MCF 10A (cell line): ENCODE measurements at regions of chrX and their contacts with region 1.

Region 1: GRCh38 chrX:133171962-133172708 is 46.0 kb downstream of the TFDP3 start:
- DNase-seq: peak; percentile 56
- H3K4me3 Mint-ChIP-seq: no peak overlapping the region
- H3K27ac Mint-ChIP-seq: no peak overlapping the region
- H3K4me1 Mint-ChIP-seq: no peaks in the 10 kb centered on the region
- H3K27me3 Mint-ChIP-seq: peaks cover 67% of the 10 kb centered on the region
- CTCF ChIP-seq: peak; percentile 71

Region 2: DNA sequence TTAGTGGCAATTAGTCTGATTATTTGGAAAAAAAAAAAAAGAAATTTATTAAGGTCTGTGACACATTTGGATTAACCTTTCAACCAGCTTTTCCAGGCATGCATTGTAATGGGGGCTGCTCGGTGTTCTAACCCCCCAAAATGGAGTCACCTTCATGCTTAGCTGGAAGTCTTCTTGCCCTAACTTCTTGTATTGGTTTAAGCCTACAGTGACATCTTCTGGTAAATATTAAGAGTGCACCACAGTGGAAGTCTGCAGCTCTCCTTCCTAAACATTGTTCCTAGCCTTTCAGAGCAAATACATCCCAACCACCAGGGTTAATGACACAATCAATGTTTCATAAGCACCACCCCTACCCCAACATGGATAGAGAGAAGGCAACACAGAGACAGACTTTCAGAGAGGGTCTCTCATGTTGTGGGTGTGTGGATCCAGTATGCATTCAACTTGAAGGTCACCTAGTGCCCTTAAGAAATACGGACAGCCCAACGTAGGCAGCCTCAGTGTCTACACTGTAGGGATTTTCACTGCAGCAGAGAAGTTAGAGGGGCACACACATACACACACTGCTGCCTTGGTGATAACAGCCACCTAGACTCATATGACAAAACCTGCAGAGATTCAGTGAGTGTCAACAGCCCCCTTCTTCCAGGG is 540.4 kb before region 1 on chrX:
- CTCF ChIA-PET with region 1: no interaction called
- POLR2A ChIA-PET with region 1: no interaction called
- intact Hi-C with region 1: loop called (anchors 1 kb)
- DNase-seq: peak; percentile 33
- H3K4me3 Mint-ChIP-seq: no peak overlapping the region
- H3K27ac Mint-ChIP-seq: no peak overlapping the region
- H3K4me1 Mint-ChIP-seq: no peaks in the 10 kb centered on the region
- H3K27me3 Mint-ChIP-seq: peaks cover 63% of the 10 kb centered on the region
- CTCF ChIP-seq: peak; percentile 38

Region 3: GRCh38 chrX:133005066-133005465 is 167.1 kb before region 1 on chrX:
- CTCF ChIA-PET with region 1: interaction called, 5 read pairs
- POLR2A ChIA-PET with region 1: interaction called, 3 read pairs
- intact Hi-C with region 1: loop called (anchors 1 kb)
- DNase-seq: peak; percentile 30
- H3K4me3 Mint-ChIP-seq: no peak overlapping the region
- H3K27ac Mint-ChIP-seq: no peak overlapping the region
- H3K4me1 Mint-ChIP-seq: no peaks in the 10 kb centered on the region
- H3K27me3 Mint-ChIP-seq: peaks cover 53% of the 10 kb centered on the region
- CTCF ChIP-seq: peak; percentile 57

Region 4: GRCh38 chrX:133134281-133134680 is 37.9 kb before region 1 on chrX:
- CTCF ChIA-PET with region 1: no interaction called
- POLR2A ChIA-PET with region 1: no interaction called
- intact Hi-C with region 1: no loop called
- DNase-seq: no peak
- H3K4me3 Mint-ChIP-seq: no peak overlapping the region
- H3K27ac Mint-ChIP-seq: no peak overlapping the region
- H3K4me1 Mint-ChIP-seq: no peaks in the 10 kb centered on the region
- H3K27me3 Mint-ChIP-seq: peaks cover 68% of the 10 kb centered on the region
- CTCF ChIP-seq: no peak

Region 5: DNA sequence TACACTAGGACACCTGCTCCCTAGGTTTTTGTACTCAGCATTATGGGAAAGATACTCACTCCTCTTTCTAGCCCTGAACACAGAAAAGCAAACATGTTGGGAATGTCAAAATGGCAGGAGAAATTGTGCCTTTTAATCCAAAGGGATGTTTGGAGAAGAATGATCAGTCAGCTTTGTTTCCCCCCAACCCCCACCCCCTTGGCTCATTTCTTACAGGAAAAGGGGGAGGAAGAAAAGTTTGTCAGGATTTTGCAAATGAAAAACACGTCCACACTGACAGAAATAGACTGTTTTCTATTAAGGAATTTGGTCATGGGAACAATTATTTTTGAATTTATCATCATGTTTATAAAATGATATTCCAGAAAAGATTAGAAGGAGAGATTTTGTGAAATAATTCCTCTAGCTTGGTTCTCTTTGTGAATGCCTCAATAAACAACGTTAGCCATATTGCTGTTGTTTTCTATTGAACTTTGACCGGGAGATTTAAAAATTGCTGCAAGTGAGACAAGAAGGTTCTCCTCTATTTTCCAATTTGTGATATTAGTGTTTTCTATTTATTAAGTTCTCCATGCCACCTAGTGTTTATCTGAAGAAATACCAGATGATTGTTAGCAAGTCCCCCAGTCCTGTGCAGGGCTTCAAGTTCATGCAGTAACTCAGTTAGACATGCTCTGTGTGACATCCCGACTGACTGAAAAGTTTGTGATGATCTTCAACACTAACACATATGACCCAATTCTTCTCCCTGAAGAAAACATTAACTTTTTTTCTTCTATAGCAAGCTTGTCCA is 77.3 kb after region 1 on chrX:
- CTCF ChIA-PET with region 1: interaction called, 5 read pairs
- POLR2A ChIA-PET with region 1: no interaction called
- intact Hi-C with region 1: loop called (anchors 2 kb)
- DNase-seq: peak; percentile 11
- H3K4me3 Mint-ChIP-seq: no peak overlapping the region
- H3K27ac Mint-ChIP-seq: no peak overlapping the region
- H3K4me1 Mint-ChIP-seq: no peaks in the 10 kb centered on the region
- H3K27me3 Mint-ChIP-seq: peaks cover 50% of the 10 kb centered on the region
- CTCF ChIP-seq: peak; percentile 4